ENCODE measurements at regions of chr12 and their contacts with region 1.

Region 1: DNA sequence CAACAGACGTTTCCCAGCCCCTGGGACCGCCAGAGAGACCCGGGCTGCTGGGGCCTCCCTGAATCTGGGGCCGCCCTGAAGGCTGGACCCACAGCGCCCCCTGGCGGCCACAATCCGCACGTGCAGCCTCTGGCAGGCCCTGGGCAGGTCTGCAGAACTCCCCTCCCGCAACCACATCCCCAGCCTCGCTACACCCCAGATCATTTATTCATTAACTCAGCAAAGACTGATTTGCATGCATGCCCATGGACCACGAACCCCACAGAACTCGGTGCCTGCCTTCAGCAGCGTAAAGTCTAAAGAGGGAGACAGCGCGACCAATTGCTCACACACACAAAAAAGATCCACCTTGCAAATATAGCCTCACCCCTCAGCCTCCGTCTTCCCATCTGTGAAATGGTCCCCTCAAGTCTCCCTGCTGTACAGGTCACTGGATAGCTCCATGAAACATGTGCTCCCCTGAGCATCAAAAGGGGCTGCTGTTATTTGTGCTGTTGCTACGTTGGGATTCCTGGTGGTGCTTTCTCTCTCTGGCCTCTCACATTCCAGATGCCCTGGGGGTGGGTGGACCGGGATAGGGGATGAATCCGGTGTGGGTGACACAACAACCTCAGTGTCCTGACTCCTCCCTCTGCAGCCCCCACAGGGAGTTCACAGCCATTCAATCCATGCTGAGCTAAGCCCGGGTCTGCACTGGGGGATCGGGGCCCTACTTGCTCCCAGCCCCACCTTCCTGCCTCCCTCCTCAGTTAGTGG is 96.4 kb downstream of the SCARB1 start:
- DNase-seq: peak; percentile 83
- H3K4me3 ChIP-seq: no peak overlapping the region
- H3K27ac ChIP-seq: no peak overlapping the region
- H3K4me1 ChIP-seq: peaks cover 7% of the 10 kb centered on the region
- H3K27me3 ChIP-seq: no peaks in the 10 kb centered on the region
- CTCF ChIP-seq: peak; percentile 98

Region 2: DNA sequence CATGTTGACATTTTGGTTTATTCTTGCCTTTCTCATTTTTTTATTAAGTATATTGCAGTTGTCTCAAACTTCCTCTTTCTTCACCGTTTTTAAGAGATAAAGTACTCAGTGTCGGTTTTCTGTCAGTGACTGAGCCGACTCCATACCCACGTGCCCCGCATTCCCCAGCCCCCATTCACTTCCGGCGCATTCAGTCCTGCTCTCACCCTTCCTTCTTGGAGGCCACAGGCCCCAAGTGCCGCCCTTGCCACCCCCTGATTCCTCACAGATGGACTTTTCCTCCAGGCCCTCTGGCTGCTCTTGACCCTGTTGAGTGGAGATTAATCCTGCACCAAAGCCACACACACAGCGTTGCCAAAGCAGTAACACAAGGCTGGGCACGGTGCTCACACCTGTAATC is 1024.2 kb before region 1 on chr12:
- CTCF ChIA-PET with region 1: no interaction called
- POLR2A ChIA-PET with region 1: no interaction called
- intact Hi-C with region 1: no loop called
- DNase-seq: no peak
- H3K4me3 ChIP-seq: no peak overlapping the region
- H3K27ac ChIP-seq: no peak overlapping the region
- H3K4me1 ChIP-seq: no peaks in the 10 kb centered on the region
- H3K27me3 ChIP-seq: no peaks in the 10 kb centered on the region
- CTCF ChIP-seq: no peak

Region 3: GRCh38 chr12:123801573-123802178 is 965.6 kb before region 1 on chr12:
- CTCF ChIA-PET with region 1: no interaction called
- POLR2A ChIA-PET with region 1: no interaction called
- intact Hi-C with region 1: loop called (anchors 10 kb)
- DNase-seq: peak; percentile 37
- H3K4me3 ChIP-seq: no peak overlapping the region
- H3K27ac ChIP-seq: no peak overlapping the region
- H3K4me1 ChIP-seq: no peaks in the 10 kb centered on the region
- H3K27me3 ChIP-seq: no peaks in the 10 kb centered on the region
- CTCF ChIP-seq: peak; percentile 65

Region 4: GRCh38 chr12:124036674-124037109 is 730.6 kb before region 1 on chr12:
- CTCF ChIA-PET with region 1: interaction called, 8 read pairs
- POLR2A ChIA-PET with region 1: interaction called, 4 read pairs
- intact Hi-C with region 1: loop called (anchors 1 kb)
- DNase-seq: peak; percentile 59
- H3K4me3 ChIP-seq: no peak overlapping the region
- H3K27ac ChIP-seq: no peak overlapping the region
- H3K4me1 ChIP-seq: peaks cover 30% of the 10 kb centered on the region
- H3K27me3 ChIP-seq: no peaks in the 10 kb centered on the region
- CTCF ChIP-seq: peak; percentile 94

Region 5: DNA sequence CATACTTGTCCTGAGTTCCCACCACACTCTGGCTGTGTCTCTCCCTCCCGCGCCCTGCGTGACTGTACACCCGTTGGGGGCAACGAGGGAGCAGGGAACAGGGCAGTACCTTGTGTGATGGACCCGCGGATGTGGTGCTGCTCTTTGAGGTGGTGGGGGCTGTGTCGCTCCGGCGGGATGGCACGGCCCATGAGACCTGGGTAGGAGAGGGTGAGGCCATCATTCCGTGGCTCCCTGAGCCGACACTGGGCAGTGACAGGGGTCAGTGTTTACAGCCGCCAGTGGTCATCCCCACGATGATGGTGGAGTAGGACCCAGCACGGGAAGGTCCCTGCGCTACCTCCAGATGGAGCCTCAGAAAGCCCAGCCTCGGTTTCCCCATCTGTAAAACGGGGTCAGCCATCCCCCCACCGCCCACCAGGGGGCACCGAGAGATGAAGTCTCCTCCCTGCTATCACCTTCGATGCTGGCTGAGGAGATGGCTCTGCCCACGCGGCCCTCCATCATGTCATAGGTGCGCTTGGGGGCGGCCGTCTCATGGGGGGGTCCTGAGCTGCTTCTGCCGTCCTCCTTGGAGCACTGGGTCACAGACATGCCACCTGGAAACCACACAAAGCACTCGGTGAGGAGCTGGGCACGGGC is 419.4 kb before region 1 on chr12:
- CTCF ChIA-PET with region 1: no interaction called
- POLR2A ChIA-PET with region 1: no interaction called
- intact Hi-C with region 1: loop called (anchors 10 kb)
- DNase-seq: no peak
- H3K4me3 ChIP-seq: no peak overlapping the region
- H3K27ac ChIP-seq: no peak overlapping the region
- H3K4me1 ChIP-seq: no peaks in the 10 kb centered on the region
- H3K27me3 ChIP-seq: no peaks in the 10 kb centered on the region
- CTCF ChIP-seq: peak; percentile 56

Region 6: DNA sequence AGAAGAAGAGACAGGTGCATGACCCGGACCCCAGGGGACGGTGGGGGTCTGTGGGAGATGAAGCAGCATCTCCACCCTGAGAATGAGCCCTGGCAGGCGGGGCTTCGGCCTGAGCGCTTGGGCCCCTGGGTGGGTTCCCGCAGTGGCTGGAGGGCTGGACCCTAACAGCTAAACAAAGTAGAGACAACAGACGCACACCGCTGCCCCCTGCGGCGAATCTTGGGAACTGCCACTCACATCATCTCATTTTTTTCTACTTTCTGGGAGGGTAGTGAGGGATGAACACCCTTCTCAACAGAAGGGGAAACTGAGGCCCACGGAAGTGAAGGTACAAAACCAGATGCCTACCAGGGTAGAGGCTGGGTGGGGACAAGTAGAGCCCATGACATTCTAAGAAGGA is 367.6 kb before region 1 on chr12:
- CTCF ChIA-PET with region 1: no interaction called
- POLR2A ChIA-PET with region 1: no interaction called
- intact Hi-C with region 1: no loop called
- DNase-seq: no peak
- H3K4me3 ChIP-seq: no peak overlapping the region
- H3K27ac ChIP-seq: no peak overlapping the region
- H3K4me1 ChIP-seq: peaks cover 33% of the 10 kb centered on the region
- H3K27me3 ChIP-seq: no peaks in the 10 kb centered on the region
- CTCF ChIP-seq: peak; percentile 68

Region 7: DNA sequence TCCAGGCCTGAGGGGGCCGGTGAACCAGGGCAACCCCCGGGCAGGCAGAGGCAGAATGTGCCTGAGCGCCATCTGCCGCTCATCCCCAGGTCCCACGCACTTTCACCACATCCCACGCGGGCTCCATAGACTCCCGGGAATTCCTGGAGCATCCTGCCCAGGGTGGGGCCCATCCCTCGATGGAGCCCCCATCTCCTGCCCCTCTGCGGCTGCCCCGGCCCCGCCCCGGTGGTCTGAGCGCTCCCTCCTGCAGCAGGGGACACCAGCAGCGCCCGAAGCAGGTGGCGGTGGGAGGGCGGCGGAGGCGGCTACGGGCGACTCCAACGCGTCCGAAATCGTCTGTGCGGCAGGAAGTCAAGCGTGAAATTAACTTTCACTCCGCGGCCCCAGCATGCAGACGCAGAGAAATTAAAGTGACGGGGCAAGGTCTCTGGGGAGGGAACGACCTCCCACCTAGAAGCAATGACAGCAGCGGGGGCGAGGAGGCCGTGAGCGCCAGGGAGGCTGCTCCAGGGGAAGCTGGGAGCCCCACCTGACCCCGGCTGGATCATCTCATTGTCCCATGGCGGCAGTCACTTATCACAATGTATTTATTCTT is 322.0 kb before region 1 on chr12:
- CTCF ChIA-PET with region 1: interaction called, 10 read pairs
- POLR2A ChIA-PET with region 1: no interaction called
- intact Hi-C with region 1: no loop called
- DNase-seq: peak; percentile 70
- H3K4me3 ChIP-seq: no peak overlapping the region
- H3K27ac ChIP-seq: peak overlapping the region; percentile 53
- H3K4me1 ChIP-seq: peaks cover 39% of the 10 kb centered on the region
- H3K27me3 ChIP-seq: no peaks in the 10 kb centered on the region
- CTCF ChIP-seq: peak; percentile 54

Region 8: GRCh38 chr12:124727264-124727721 is 40.0 kb before region 1 on chr12:
- CTCF ChIA-PET with region 1: no interaction called
- POLR2A ChIA-PET with region 1: no interaction called
- intact Hi-C with region 1: no loop called
- DNase-seq: no peak
- H3K4me3 ChIP-seq: no peak overlapping the region
- H3K27ac ChIP-seq: peak overlapping the region; percentile 28
- H3K4me1 ChIP-seq: no peaks in the 10 kb centered on the region
- H3K27me3 ChIP-seq: no peaks in the 10 kb centered on the region
- CTCF ChIP-seq: no peak

Region 9: GRCh38 chr12:124837958-124838803 is 70.9 kb after region 1 on chr12:
- CTCF ChIA-PET with region 1: no interaction called
- POLR2A ChIA-PET with region 1: no interaction called
- intact Hi-C with region 1: no loop called
- DNase-seq: peak; percentile 63
- H3K4me3 ChIP-seq: no peak overlapping the region
- H3K27ac ChIP-seq: no peak overlapping the region
- H3K4me1 ChIP-seq: no peaks in the 10 kb centered on the region
- H3K27me3 ChIP-seq: no peaks in the 10 kb centered on the region
- CTCF ChIP-seq: no peak